ENCODE measurements at regions of chr13 and their contacts with region 1.

Region 1: DNA sequence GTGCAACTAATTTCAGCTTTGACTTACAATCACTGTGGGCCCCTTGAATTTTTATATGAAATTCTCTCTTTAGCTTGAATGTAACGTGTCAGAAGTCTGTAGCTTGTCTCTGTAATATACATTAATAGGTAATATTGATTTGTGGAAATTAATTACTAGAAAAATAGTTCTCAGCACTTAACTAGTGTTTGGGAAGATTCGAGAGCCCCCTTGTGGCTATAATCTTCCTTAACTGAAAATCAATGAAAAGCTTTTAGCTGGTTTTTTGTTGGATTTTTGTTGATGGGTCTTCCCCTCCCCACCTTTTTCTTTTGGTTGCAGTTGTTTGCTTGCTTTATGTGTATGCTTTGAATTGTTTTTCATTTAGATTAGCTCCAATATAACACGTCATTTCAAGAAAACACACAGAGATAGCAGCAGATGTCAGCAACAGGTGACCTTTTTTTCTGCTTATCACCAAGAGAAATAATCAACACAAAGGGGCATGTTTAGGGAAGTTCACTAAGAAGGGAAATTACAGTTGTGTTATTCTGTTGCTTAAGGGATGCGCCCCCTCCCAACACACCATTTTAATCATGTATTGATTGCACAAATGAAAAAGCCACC is 176.8 kb downstream of the OXGR1 start:
- DNase-seq: no peak
- ATAC-seq: no peak
- H3K4me3 ChIP-seq: no peak overlapping the region
- H3K27ac ChIP-seq: no peak overlapping the region
- H3K4me1 ChIP-seq: peaks cover 0 to 4% of the 10 kb centered on the region in 2 donors
- H3K27me3 ChIP-seq: no peaks in the 10 kb centered on the region
- CTCF ChIP-seq: peak in 4 of 5 experiments; percentile 23 to 52 (median 48)
- POLR2A ChIP-seq: no peak

Region 2: DNA sequence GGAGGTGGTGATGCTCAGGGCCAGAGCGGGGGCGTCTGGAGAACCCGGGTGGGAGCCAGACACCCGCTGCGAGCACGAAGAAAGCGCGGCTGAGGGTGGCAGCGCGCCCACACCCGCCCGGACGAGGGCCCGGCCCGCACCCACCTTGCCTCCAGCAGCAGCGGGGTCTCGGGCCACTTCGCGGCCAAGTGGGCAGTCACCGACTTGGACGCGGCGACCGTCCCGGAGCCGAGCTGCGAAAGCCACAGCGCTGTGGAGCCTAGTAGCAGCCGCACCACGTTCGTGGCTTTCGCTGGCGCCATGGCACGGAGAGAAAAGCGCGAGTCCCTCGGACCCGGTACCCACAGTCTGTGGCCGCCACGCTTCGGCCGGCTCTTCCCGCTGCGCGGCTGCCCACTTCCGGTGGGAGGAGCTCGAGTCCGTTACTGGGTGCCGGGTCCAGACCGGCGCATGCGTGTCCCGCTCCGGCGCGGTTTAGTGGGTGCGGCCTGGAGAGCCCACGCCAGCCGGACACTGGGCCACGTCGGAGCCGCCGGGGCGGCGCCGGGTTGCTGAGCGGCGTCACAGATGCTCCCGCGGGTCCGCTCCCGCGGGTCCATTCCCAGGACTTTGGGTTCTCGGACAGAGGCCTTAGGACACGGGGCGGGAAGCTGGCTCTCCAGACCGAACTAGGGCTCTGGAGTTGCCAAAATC is 764.3 kb before region 1 on chr13 and contains the start of gene UGGT2:
- in situ Hi-C with region 1: no loop called
- intact Hi-C with region 1: loop called (anchors 10 kb)
- DNase-seq: peak; percentile 78 to 90
- ATAC-seq: peak; percentile 94 to 95
- H3K4me3 ChIP-seq: peak within 1 kb of the TSS; percentile 66 to 97 (median 94)
- H3K27ac ChIP-seq: peak within 1 kb of the TSS; percentile 78 to 83 (median 80)
- H3K4me1 ChIP-seq: peaks cover 5 to 9% of the 10 kb centered on the region in 2 donors
- H3K27me3 ChIP-seq: no peaks in the 10 kb centered on the region
- CTCF ChIP-seq: peak in 2 of 5 experiments; percentile 14 to 31
- POLR2A ChIP-seq: peak; percentile 70 to 72
- total RNA-seq, gene UGGT2: 4.0 to 10.6 (median 6.8) TPM

Region 3: DNA sequence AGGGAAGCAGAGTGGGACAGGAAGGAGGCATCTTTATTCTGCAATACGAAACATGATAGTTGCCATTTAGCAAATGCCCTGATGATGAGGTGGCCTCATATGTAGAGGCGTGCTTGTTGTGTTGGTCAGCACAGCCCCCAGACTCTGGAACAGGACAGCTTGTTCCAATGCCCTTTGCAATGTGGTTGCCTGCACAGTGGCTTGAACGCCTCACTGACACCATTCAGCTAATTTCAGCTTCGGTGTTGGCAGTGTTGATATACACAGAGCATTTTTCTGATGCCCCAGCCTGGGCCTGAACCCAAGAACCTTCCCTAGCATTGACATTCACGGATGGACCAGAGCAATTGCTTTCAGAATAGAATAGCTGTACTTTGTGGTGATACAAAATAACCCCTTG is 594.2 kb before region 1 on chr13:
- in situ Hi-C with region 1: no loop called
- intact Hi-C with region 1: loop called (anchors 5 kb)
- DNase-seq: peak; percentile 42 to 86
- ATAC-seq: peak; percentile 86 to 93
- H3K4me3 ChIP-seq: no peak overlapping the region
- H3K27ac ChIP-seq: peak overlapping the region; percentile 68 to 79 (median 74)
- H3K4me1 ChIP-seq: peaks cover 0 to 8% of the 10 kb centered on the region in 2 donors
- H3K27me3 ChIP-seq: no peaks in the 10 kb centered on the region
- CTCF ChIP-seq: no peak
- POLR2A ChIP-seq: no peak

Measured in gastrocnemius medialis (tissue), 4 donors.